Dendritic cell treated with granulocyte-macrophage colony-stimulating factor and Interleukin-4, amounts not matched to agents 40 ng/mL and 50 ng/mL, for 4 days (primary cell): ENCODE measurements at regions of chr17 and their contacts with region 1.

Region 1: GRCh38 chr17:81034779-81035388 is at the start of gene BAIAP2:
- H3K4me3 Mint-ChIP-seq: peak within 1 kb of the TSS; percentile 97
- H3K27ac Mint-ChIP-seq: peak within 1 kb of the TSS; percentile 83
- H3K4me1 Mint-ChIP-seq: peaks cover 88% of the 10 kb centered on the region
- H3K27me3 Mint-ChIP-seq: peaks cover 41% of the 10 kb centered on the region

Region 2: GRCh38 chr17:80991645-80992076 is 43.2 kb before region 1 on chr17 and contains the start of gene CHMP6:
- intact Hi-C with region 1: loop called (anchors 5 kb)
- H3K4me3 Mint-ChIP-seq: peak within 1 kb of the TSS; percentile 73
- H3K27ac Mint-ChIP-seq: no peak within 1 kb of the TSS
- H3K4me1 Mint-ChIP-seq: peaks cover 46% of the 10 kb centered on the region
- H3K27me3 Mint-ChIP-seq: peaks cover 23% of the 10 kb centered on the region

Region 3: DNA sequence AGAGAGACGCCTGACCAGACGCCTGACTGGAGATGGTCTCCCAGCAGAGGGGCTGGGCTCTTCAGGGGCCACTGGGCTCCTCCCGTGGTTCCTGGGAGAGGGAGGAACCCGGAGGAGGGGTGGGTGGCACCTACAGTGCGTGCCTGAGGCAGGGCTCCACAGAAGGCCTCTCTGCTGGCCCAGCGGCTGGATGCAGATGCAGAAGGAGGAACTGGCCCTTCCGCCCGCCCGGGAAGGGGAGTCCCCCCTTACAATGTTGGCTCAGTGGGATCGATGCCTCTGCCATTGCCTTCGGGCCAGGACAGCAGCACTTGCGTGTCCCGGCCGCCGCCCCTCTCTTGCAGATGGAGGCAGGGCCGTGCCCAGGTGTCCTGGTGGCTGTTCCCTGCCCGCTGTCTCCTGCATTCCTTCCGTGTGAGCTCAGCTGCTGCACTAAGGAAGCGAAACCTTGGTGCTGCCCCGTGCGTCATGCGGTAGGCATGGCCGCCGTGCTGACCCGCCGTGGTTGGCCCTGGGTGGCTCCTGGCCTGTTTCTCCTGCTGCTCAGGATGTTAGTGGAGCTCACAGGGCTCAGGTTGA is 15.2 kb after region 1 on chr17:
- intact Hi-C with region 1: loop called (anchors 2 kb)
- H3K4me3 Mint-ChIP-seq: peak overlapping the region; percentile 73
- H3K27ac Mint-ChIP-seq: peak overlapping the region; percentile 98
- H3K4me1 Mint-ChIP-seq: peaks cover 81% of the 10 kb centered on the region
- H3K27me3 Mint-ChIP-seq: peaks cover 5% of the 10 kb centered on the region